HEK293T (cell line): ENCODE measurements at regions of chr3 and their contacts with region 1.

Region 1: DNA sequence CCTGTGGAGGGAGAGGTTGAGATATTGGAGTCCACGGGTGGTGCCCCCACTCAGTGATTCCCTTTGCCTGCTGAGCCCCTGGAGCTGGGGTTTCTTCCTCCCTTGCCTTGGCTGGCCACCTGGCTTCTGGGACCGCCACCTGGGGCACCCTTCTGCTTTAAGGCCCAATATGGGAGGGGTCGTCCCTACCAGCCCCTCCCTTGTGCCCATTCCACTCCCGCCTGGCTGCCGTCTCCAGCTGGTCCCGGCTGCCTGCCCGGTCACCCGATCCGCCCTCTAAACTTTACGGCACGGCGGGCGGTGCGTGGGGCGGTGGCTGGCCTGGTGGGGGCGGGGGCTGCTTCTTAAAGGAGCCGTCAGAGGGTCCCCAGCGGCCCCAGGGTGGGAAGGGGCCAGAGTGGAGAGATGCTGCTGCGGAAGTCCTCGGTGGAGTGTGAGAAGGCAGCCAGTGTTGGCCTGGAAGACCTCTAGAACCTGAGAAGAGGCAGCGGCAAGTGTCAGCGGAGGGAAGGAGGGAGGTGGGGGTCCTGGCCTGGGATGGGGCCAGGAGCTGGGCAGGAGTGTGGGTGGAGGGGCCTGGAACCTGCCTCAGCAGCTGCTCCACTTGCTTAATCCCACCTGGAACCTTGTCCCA is 1.6 kb upstream of the SEMA3B start:
- DNase-seq: peak; percentile 55

Region 2: GRCh38 chr3:50227390-50228183 is 39.8 kb before region 1 on chr3:
- CTCF ChIA-PET with region 1: interaction called, 5 read pairs
- POLR2A ChIA-PET with region 1: interaction called, 12 read pairs
- DNase-seq: peak; percentile 89